ENCODE measurements at regions of chr10 and their contacts with region 1.

Region 1: DNA sequence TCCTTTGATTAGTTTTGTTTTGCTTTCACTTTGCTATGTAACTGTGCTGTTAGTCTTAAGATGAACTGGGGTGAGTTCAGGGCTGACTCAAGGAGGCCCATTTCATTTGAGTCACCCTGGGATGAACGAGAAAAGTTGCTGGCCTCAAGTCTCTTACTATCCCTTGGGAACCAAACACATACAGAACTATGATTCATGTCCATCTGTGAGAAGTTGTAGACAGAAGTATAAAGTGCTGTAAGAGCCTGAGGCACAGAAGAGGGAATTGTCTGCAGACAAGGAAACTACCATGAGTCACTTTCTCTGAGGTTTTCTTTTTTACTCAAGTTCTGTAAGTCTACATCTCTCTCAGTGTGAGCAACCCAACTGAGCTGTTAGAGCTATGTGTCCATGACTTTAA is 179.8 kb upstream of the CSTF2T start:
- DNase-seq: peak; percentile 55
- H3K4me3 Mint-ChIP-seq: no peak overlapping the region
- H3K27ac Mint-ChIP-seq: no peak overlapping the region
- H3K4me1 Mint-ChIP-seq: peaks cover 18% of the 10 kb centered on the region
- H3K27me3 Mint-ChIP-seq: no peaks in the 10 kb centered on the region

Region 2: DNA sequence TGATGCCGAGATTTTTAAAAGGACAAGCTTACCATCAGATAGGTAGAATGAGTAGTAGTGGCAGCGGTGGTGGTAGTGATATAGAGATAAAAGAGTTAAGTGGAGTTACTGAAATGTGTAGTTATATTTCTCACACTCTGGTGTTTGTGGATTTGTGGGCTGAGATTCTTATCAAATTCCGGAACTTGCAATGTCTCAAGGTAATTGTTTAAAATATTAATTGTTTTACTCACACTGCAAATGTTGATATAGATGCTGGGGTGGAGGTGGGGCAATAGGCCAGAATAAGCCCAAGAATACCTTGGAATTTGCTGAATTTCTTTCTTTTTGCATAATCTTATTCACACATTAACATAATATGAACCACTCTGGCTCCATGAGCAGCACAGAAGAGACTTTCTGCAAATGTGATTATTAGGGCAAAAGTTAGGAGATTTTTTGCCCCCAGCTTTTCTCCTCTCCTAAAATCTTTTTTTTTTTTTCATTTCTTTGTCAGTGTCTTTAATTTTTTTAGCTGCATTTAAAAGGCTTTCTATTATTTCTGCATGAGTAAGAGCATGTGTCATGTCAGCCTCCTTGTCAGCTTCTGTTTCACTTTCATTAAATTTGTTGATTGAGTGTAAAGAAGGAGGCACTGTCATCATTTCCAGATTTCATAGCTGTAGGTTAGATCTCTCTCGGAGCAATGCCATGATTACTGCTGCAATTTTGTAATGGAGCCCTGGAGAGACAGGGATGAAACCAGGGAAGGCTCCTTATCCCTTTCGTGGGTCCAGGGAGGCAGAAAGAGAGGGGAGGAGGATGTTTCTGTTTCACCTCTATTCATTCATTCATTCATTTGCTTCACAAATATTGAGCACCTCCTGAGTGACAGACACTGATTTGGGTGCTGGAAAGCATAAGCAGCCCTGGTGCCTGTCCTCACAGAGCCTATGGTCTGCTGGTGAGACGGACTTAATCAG is 1242.3 kb before region 1 on chr10:
- CTCF ChIA-PET with region 1: no interaction called
- intact Hi-C with region 1: loop called (anchors 10 kb)
- DNase-seq: peak; percentile 55
- H3K4me3 Mint-ChIP-seq: no peak overlapping the region
- H3K27ac Mint-ChIP-seq: peak overlapping the region; percentile 9
- H3K4me1 Mint-ChIP-seq: peaks cover 27% of the 10 kb centered on the region
- H3K27me3 Mint-ChIP-seq: peaks cover 4% of the 10 kb centered on the region

Region 3: DNA sequence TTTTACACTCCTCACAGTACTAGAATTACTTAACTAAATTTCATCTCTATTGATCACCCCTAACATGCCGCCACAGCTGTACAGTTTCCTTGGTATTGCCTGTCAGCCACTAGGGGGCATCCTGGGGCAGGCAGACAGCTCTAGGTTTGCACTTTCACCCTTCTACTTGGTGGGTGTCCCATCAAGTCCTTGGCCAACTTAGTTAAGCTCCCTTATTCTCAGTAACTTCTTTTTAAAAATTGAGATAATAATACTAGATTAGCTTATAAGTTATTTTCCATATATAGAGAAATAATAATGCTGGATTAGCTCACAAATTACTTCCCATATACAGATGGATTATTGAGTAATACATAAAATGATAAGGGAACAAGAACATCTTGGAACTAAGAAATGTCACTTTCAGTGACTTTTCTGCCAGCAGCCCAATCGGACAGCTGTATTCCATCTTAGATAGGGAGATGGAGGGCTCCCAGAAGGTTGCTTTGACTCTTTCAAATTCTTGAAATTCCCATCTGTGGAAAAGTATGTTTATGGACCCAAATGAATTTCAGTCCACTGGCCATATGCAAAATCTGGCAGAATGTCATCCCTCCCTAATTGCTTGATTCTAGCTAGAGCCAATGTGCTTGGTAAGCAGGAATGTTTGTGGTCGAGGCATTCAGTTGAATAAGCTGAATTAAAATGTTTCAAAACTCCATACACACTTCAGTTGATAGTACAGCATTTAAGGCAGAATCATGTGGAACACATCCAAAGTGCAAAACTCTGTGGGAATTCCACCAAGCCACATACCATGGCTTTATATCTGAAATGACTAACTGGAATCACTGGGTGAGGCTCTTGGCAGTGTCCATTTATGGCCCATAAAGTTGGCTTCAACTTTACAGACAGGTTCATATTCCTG is 489.6 kb before region 1 on chr10:
- CTCF ChIA-PET with region 1: no interaction called
- intact Hi-C with region 1: loop called (anchors 10 kb)
- DNase-seq: peak; percentile 65
- H3K4me3 Mint-ChIP-seq: no peak overlapping the region
- H3K27ac Mint-ChIP-seq: no peak overlapping the region
- H3K4me1 Mint-ChIP-seq: no peaks in the 10 kb centered on the region
- H3K27me3 Mint-ChIP-seq: peaks cover 3% of the 10 kb centered on the region

Region 4: GRCh38 chr10:51699475-51700227 is 179.6 kb before region 1 on chr10 and contains the start of gene CSTF2T:
- CTCF ChIA-PET with region 1: no interaction called
- intact Hi-C with region 1: loop called (anchors 1 kb)
- DNase-seq: peak; percentile 94
- H3K4me3 Mint-ChIP-seq: peak within 1 kb of the TSS; percentile 97
- H3K27ac Mint-ChIP-seq: peak within 1 kb of the TSS; percentile 100
- H3K4me1 Mint-ChIP-seq: peaks cover 45% of the 10 kb centered on the region
- H3K27me3 Mint-ChIP-seq: no peaks in the 10 kb centered on the region
- total RNA-seq, gene CSTF2T: 25.3 to 25.6 TPM

Region 5: DNA sequence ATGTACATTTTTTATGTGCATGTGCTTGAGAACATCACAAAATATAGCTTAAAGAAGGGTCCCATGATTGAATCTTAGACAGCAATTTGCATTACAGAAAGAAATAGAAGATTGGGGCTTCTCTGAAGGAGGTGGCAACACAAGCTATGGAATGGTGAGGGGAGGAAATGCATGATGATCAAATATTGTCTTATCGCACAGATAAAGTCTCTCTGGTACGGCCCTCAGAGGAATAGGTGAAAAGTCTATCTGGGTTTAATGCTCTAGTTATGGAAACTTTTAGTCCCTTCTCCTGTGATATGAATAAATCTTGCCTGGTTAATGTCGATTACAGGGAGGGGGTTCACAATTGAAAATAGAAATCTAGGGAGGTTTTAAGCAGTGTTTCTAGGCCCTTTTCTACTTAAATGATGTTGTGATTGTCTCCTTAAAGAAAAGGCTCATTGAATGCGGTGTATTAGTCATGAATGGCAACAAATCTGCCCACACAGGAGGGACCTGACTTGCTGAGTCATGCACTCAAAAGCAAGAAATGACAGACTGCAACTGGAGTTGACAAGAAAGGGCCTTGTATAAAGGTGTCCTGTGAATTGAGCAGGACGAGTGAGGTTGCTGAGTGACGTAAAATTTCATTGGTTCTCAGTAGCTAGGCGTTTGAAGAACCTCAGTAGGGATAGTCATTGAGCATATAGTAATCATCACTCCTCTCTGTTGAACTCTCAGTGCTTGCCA is 46.4 kb before region 1 on chr10:
- CTCF ChIA-PET with region 1: no interaction called
- intact Hi-C with region 1: loop called (anchors 1 kb)
- DNase-seq: peak; percentile 22
- H3K4me3 Mint-ChIP-seq: no peak overlapping the region
- H3K27ac Mint-ChIP-seq: no peak overlapping the region
- H3K4me1 Mint-ChIP-seq: peaks cover 4% of the 10 kb centered on the region
- H3K27me3 Mint-ChIP-seq: no peaks in the 10 kb centered on the region

Region 6: DNA sequence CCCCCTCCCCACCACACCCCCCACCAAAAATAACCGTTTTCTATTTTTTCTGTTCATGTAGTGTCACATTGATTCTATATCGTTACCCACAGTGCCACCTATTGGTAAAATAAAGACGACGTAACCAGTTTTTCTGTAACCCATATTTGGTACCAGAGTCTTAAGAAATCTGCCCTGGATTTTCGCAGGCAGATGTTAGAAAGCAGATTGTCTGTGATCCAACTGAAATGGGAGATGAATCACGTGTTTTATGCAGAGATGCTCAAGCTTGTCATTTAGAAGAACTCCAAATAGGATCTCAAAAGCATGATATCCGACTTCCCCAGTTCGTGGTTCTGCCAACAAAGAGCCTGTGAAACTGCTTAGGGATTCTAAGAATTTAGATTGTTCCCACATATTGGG is 81.3 kb after region 1 on chr10:
- CTCF ChIA-PET with region 1: interaction called, 3 read pairs
- intact Hi-C with region 1: loop called (anchors 5 kb)
- DNase-seq: no peak
- H3K4me3 Mint-ChIP-seq: no peak overlapping the region
- H3K27ac Mint-ChIP-seq: no peak overlapping the region
- H3K4me1 Mint-ChIP-seq: no peaks in the 10 kb centered on the region
- H3K27me3 Mint-ChIP-seq: peaks cover 16% of the 10 kb centered on the region